Activated naive CD4-positive, alpha-beta T cell treated with anti-CD3 and anti-CD28 coated beads for 36 hours (primary cell): ENCODE measurements at regions of chrX and their contacts with region 1.

Region 1: GRCh38 chrX:135521405-135522189 is 1.1 kb downstream of the INTS6L start:
- DNase-seq: peak; percentile 91
- H3K4me3 Mint-ChIP-seq: peak overlapping the region; percentile 97
- H3K27ac Mint-ChIP-seq: peak overlapping the region; percentile 97
- H3K4me1 Mint-ChIP-seq: peaks cover 38% of the 10 kb centered on the region
- H3K27me3 Mint-ChIP-seq: no peaks in the 10 kb centered on the region

Region 2: DNA sequence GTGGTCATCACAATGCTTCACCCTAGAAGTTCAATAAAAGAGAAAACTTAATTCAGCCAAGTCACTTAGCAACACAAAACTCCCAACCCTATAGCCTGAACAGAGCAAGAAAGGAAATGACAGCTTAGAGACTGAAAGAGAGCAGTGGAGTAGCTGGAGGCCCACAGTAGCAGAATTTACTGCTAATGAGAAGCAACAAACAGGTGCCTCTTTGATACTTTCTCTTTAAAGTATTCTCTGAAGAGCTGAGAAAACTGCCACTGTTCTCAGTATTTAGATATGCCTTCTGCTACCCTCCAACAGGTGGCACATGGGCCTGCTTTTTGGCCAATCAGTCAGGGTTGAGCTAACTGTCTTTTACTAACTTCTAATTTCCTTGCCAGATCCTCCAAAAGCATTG is 1776.2 kb before region 1 on chrX:
- CTCF ChIA-PET with region 1: no interaction called
- intact Hi-C with region 1: loop called (anchors 5 kb)
- DNase-seq: peak; percentile 37
- H3K4me3 Mint-ChIP-seq: no peak overlapping the region
- H3K27ac Mint-ChIP-seq: no peak overlapping the region
- H3K4me1 Mint-ChIP-seq: peaks cover 54% of the 10 kb centered on the region
- H3K27me3 Mint-ChIP-seq: no peaks in the 10 kb centered on the region

Region 3: DNA sequence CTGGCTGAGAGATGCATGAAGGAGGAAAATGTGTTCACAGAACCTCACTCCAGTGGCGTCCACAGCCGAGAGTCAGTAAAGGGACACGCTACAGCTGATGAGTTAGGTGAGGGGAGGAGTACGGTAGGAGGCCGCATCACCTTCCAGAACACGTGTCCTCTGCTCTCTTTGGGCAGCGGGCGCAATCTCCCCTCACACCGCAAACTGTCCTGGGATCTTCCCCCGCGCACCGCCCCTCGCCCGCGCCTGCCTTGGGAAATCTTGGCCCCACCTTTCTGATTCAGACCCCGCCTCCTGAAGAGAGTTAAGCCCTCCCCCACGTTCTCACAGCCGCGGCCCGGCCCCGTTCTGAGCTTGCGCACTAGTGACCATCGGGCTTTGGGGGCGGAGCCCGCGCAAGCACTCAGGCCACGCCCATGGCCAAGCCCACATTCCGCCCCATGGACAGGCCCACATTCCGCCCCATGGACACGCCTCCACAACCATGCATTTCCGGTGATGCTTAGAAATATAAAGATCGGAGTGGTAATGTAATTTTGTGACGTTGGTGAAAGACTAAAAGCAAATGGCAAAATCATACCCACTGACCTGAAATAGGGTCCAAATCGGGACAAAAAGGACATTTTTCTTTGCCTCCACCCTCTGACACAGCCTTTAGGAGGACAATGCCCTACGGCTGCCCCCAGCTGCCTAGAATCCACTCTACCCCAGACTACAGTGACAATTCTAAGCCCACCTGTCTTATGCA is 517.5 kb before region 1 on chrX:
- CTCF ChIA-PET with region 1: no interaction called
- intact Hi-C with region 1: loop called (anchors 2 kb)
- DNase-seq: peak; percentile 93
- H3K4me3 Mint-ChIP-seq: peak overlapping the region; percentile 84
- H3K27ac Mint-ChIP-seq: no peak overlapping the region
- H3K4me1 Mint-ChIP-seq: peaks cover 8% of the 10 kb centered on the region
- H3K27me3 Mint-ChIP-seq: no peaks in the 10 kb centered on the region

Region 4: GRCh38 chrX:135421537-135421931 is 100.1 kb before region 1 on chrX:
- CTCF ChIA-PET with region 1: no interaction called
- intact Hi-C with region 1: loop called (anchors 1 kb)
- DNase-seq: peak; percentile 92
- H3K4me3 Mint-ChIP-seq: peak overlapping the region; percentile 70
- H3K27ac Mint-ChIP-seq: no peak overlapping the region
- H3K4me1 Mint-ChIP-seq: peaks cover 7% of the 10 kb centered on the region
- H3K27me3 Mint-ChIP-seq: no peaks in the 10 kb centered on the region

Region 5: DNA sequence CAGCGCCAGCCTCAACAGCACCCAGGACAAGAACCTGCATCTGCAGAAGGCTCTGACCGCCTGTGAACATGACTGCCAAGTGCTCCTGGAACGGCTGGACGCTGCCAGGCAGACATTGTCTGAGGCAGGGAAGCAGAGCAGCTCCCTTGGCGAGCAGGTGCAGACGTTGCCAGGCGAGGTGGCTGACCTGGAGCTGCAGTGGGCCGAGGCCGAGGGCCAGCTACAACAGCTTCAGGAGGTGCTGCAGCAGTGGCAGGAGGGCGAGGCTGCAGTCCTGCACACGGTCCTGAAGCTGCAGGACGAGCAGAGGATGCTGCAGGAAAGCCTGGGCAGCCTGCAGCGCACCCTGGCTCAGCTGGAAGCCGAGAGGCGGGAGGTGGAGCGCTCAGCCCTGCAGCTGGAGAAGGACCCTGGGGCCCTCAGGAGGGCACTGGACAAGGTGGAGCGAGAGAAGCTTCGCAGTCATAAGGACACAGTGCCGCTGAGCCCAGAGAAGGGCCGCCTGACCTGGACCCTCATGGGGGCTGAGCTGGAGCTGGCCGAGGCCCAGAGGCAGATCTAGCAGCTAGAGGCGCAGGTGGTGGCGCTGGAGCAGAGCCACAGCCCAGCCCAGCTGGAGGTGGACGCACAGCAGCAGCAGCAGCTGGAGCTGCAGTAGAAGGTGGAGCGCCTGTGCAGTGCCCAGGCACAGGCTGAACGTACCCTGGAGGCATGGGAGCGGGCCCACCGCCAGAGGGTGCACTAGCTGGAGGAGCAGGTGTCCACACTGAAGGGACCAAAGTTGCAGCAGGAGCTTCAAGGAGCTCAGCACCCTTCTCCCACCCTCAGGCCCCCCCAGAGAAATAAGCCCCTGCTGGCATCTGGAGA is 83.5 kb before region 1 on chrX:
- CTCF ChIA-PET with region 1: no interaction called
- intact Hi-C with region 1: no loop called
- DNase-seq: no peak
- H3K4me3 Mint-ChIP-seq: no peak overlapping the region
- H3K27ac Mint-ChIP-seq: no peak overlapping the region
- H3K4me1 Mint-ChIP-seq: no peaks in the 10 kb centered on the region
- H3K27me3 Mint-ChIP-seq: no peaks in the 10 kb centered on the region

Region 6: DNA sequence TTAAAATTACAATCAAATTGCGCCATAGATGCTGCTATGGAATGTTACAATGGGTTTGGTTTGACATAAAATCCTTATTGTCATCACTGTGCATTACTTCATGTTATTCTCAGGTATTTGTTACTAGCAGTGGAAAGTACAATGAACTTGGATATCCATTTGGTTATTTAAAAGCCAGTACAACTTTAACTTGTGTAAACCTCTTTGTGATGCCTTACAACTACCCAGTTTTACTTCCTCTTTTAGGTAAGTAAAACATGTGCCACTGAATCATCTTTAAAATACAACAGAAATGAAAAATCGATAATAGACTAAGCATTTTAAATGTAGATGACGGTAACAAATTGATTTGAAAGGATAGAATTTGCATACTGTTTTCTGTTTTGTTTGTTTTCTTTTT is 34.5 kb after region 1 on chrX:
- CTCF ChIA-PET with region 1: no interaction called
- intact Hi-C with region 1: no loop called
- DNase-seq: no peak
- H3K4me3 Mint-ChIP-seq: no peak overlapping the region
- H3K27ac Mint-ChIP-seq: no peak overlapping the region
- H3K4me1 Mint-ChIP-seq: no peaks in the 10 kb centered on the region
- H3K27me3 Mint-ChIP-seq: no peaks in the 10 kb centered on the region

Region 7: GRCh38 chrX:135572436-135572835 is 50.8 kb after region 1 on chrX:
- CTCF ChIA-PET with region 1: no interaction called
- intact Hi-C with region 1: loop called (anchors 2 kb)
- DNase-seq: no peak
- H3K4me3 Mint-ChIP-seq: no peak overlapping the region
- H3K27ac Mint-ChIP-seq: no peak overlapping the region
- H3K4me1 Mint-ChIP-seq: peaks cover 6% of the 10 kb centered on the region
- H3K27me3 Mint-ChIP-seq: no peaks in the 10 kb centered on the region

Region 8: DNA sequence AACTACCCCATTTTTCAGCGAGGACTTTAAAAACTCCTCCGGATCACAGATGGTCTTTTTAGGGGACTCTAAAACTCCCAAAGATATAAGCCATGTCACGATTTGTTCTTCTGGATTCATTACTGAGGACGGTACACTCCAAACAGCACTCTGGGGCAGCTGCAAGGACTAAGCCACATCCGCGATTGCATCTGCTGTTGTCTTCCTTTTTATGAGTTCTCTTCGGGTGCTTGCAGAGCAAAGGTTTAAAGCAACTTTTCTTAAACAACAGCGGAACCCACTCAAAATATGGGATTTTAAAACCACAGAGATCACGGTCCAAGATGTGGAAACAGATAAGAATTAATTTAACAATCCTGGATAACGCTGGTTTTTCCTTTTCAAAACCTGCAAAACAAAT is 1259.2 kb after region 1 on chrX and contains the start of gene ARHGEF6:
- CTCF ChIA-PET with region 1: no interaction called
- intact Hi-C with region 1: loop called (anchors 10 kb)
- DNase-seq: peak; percentile 54
- H3K4me3 Mint-ChIP-seq: peak within 1 kb of the TSS; percentile 90
- H3K27ac Mint-ChIP-seq: peak within 1 kb of the TSS; percentile 99
- H3K4me1 Mint-ChIP-seq: peaks cover 49% of the 10 kb centered on the region
- H3K27me3 Mint-ChIP-seq: no peaks in the 10 kb centered on the region
- total RNA-seq, gene ARHGEF6: 56.1 to 58.5 TPM